PC-3 (cell line): ENCODE measurements at regions of chr4 and their contacts with region 1.

Region 1: GRCh38 chr4:66097172-66097670 is 426.9 kb upstream of the EPHA5 start:
- DNase-seq: peak; percentile 93
- ATAC-seq: peak; percentile 83
- H3K4me3 ChIP-seq: no peak overlapping the region
- H3K27ac ChIP-seq: peak overlapping the region; percentile 94
- H3K4me1 ChIP-seq: peaks cover 46% of the 10 kb centered on the region
- H3K27me3 ChIP-seq: no peaks in the 10 kb centered on the region
- CTCF ChIP-seq: no peak

Region 2: DNA sequence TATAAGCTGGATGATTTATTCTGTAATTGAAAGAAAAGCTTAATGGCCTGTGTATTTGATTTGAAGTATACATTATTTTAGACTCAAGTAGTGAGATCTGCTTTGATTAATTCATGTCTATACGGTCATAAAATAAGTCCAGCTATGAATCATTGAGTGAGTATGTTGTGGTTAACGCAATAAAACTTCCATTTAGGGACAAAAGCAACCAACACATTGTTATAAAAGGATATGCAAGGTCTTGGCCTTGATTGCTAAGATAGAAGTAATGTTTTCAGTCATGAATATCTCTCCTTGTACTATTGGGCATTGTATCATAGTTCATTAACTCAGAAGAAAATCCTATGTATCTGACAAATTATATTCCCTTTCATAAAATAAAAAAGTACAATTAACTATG is 589.1 kb before region 1 on chr4:
- CTCF ChIA-PET with region 1: no interaction called
- POLR2A ChIA-PET with region 1: no interaction called
- intact Hi-C with region 1: loop called (anchors 10 kb)
- DNase-seq: peak; percentile 98
- ATAC-seq: peak; percentile 72
- H3K4me3 ChIP-seq: 0 out of 2 replicates have a peak overlapping the region, but pooled peaks have one; percentile 12
- H3K27ac ChIP-seq: peak overlapping the region; percentile 79
- H3K4me1 ChIP-seq: peaks cover 46% of the 10 kb centered on the region
- H3K27me3 ChIP-seq: no peaks in the 10 kb centered on the region
- CTCF ChIP-seq: no peak

Region 3: GRCh38 chr4:65825116-65825753 is 272.0 kb before region 1 on chr4:
- CTCF ChIA-PET with region 1: no interaction called
- POLR2A ChIA-PET with region 1: no interaction called
- intact Hi-C with region 1: loop called (anchors 10 kb)
- DNase-seq: peak; percentile 91
- ATAC-seq: peak; percentile 86
- H3K4me3 ChIP-seq: no peak overlapping the region
- H3K27ac ChIP-seq: peak overlapping the region; percentile 41
- H3K4me1 ChIP-seq: peaks cover 26% of the 10 kb centered on the region
- H3K27me3 ChIP-seq: no peaks in the 10 kb centered on the region
- CTCF ChIP-seq: no peak

Region 4: DNA sequence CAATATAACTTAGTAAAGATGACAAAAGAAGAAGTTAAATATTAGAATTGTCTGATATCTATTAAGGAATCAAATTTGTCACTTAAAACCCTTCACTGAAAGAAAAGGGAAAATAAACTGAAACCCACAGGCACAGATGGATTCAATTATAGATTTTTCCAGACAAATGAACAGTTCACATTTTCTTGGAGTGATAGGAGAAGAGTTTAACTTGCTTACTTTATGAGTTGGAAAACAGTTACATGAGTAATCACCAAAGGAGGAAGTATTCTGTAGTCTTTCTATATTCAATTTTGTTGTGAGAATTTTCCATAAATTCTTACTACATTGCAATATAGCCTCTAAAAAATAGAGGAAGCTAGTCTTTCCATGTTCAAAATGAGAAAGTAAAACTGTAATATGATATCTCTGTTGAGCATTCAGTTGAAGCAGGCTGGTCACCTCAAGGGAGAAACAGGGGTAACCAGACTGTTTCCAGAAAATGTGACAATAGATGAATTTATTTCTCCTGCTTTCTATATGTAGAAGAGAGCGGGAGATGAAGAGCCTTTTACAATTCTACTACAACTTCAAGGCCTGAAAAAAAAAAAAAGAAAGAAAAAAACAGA is 96.6 kb before region 1 on chr4:
- CTCF ChIA-PET with region 1: no interaction called
- POLR2A ChIA-PET with region 1: no interaction called
- intact Hi-C with region 1: no loop called
- DNase-seq: peak; percentile 35
- ATAC-seq: peak; percentile 61
- H3K4me3 ChIP-seq: peak overlapping the region; percentile 69
- H3K27ac ChIP-seq: peak overlapping the region; percentile 11; the same call in 1 of the 2 replicates
- H3K4me1 ChIP-seq: peaks cover 4% of the 10 kb centered on the region; the same call in 1 of the 2 replicates
- H3K27me3 ChIP-seq: no peaks in the 10 kb centered on the region
- CTCF ChIP-seq: no peak